ENCODE measurements at regions of chr18 and their contacts with region 1.

Region 1: GRCh38 chr18:50287441-50288347 is at the start of gene CXXC1:
- DNase-seq: peak; percentile 99
- ATAC-seq: peak; percentile 88
- H3K4me3 ChIP-seq: peak within 1 kb of the TSS; percentile 83 to 97
- H3K27ac ChIP-seq: peak within 1 kb of the TSS; percentile 48
- H3K4me1 ChIP-seq: peaks cover 5 to 25% of the 10 kb centered on the region in 2 experiments; a peak in 3 of 4 replicates
- H3K27me3 ChIP-seq: no peaks in the 10 kb centered on the region
- CTCF ChIP-seq: peak in 1 of 3 experiments; percentile 43; a peak in 1 of 6 replicates
- POLR2A ChIP-seq: no peak
- RAD21 ChIP-seq: no peak
- total RNA-seq, gene CXXC1: 101 TPM

Region 2: DNA sequence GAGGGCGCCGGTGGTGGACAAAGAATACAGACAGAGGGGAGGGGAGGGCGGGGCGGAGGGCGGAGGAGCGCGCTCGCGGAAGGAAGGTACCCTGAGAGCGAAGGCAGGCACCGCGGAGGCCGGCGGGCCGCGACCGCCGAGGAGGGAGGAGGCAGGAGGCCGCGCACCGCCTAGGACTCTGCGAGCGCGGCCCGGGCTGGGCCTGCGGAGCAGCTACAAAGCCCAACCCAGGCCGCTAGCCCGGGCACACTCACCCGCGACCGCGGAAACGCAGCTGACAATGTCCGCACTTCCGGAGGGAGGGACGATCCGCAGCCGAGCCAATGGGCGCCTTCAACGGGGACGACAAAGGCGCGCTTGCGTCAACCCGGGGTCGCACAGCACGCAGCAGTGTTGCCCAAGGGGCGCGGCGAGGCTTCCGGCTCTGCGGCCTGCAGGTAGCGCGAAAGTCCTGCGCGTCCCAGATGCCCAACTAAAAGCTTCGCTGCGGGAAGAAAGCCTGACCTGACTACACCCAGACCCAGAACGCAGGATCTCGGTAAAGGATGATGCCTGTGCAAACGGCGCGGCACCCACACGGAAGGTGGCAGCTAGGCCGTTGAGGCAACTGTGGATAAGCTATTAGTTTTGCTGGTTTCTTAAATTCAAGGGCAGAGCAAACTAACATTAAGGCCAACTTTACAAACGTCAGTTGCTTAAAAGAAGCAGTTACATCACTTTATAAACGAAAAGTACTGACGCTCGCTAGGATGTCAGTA is 800.6 kb before region 1 on chr18 and contains the start of gene C18orf32:
- CTCF ChIA-PET with region 1: no interaction called
- POLR2A ChIA-PET with region 1: no interaction called
- RAD21 ChIA-PET with region 1: no interaction called
- intact Hi-C with region 1: loop called (anchors 10 kb)
- DNase-seq: peak; percentile 83
- ATAC-seq: peak; percentile 92
- H3K4me3 ChIP-seq: peak within 1 kb of the TSS; percentile 78 to 95
- H3K27ac ChIP-seq: peak within 1 kb of the TSS; percentile 76
- H3K4me1 ChIP-seq: peaks cover 10 to 46% of the 10 kb centered on the region in 2 experiments; a peak in 3 of 4 replicates
- H3K27me3 ChIP-seq: no peaks in the 10 kb centered on the region
- CTCF ChIP-seq: no peak
- POLR2A ChIP-seq: peak; percentile 81
- RAD21 ChIP-seq: no peak
- total RNA-seq, gene C18orf32: 35.0 TPM

Region 3: DNA sequence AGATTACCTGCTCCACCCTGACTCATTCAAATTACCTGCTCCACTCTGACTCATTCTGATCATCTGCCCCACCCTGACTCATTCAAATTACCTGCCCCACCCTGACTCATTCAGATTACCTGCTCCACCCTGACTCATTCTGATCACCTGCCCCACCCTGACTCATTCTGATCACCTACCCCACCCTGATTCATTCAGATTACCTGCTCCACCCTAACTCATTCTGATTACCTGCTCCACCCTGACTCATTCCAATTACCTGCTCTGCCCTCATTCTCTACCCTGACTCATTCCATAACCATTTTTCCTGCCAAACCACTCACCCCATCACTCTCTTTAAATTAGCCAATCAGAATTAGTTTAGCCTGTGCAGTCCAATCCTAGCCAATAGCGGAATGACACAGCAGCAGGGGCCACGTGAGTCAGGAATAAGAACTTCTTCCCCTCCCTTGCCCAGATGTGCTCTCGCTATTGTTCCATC is 47.6 kb before region 1 on chr18:
- CTCF ChIA-PET with region 1: no interaction called
- POLR2A ChIA-PET with region 1: no interaction called
- RAD21 ChIA-PET with region 1: no interaction called
- intact Hi-C with region 1: loop called (anchors 2 kb)
- DNase-seq: peak; percentile 93
- ATAC-seq: peak; percentile 88
- H3K4me3 ChIP-seq: no peak overlapping the region; a peak in 1 of 4 replicates
- H3K27ac ChIP-seq: peak overlapping the region; percentile 52; the same call in 1 of the 2 replicates
- H3K4me1 ChIP-seq: peaks cover 2 to 26% of the 10 kb centered on the region in 2 experiments; a peak in 3 of 4 replicates
- H3K27me3 ChIP-seq: no peaks in the 10 kb centered on the region
- CTCF ChIP-seq: no peak
- POLR2A ChIP-seq: no peak
- RAD21 ChIP-seq: no peak

Region 4: DNA sequence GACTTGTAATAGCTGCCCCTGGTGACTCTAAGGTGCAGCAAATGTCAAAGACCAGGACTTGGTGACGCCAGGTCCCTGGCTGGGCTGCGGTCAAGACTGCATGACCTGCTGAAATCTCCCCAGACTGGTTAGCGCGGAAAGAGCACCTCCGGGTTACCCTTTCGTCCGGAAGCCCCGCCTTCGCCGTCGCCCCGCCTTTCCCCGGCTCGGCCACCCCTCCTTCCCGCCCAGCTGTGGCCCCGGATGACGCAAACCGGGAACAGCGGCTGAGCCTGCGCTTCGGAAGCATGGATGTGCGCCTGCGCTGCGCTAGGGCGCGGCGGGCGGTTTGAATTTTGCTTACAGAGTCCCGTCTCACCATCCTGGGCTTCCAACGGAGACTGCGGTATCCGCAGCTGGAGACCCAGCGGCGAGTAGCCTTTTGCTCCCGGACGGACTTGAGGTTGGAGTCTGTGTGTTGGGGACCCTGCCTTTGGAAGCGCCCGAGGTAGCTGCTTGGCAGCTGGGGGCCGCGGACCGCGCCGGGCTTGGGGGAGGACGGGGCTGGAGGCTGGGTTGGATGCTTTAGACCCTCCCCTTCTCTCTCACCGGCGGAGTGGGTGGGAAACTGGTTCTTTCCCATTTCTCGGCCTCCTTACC is 87.2 kb after region 1 on chr18 and contains the start of gene SKA1:
- CTCF ChIA-PET with region 1: no interaction called
- POLR2A ChIA-PET with region 1: no interaction called
- RAD21 ChIA-PET with region 1: no interaction called
- intact Hi-C with region 1: loop called (anchors 5 kb)
- DNase-seq: peak; percentile 89
- ATAC-seq: peak; percentile 97
- H3K4me3 ChIP-seq: peak within 1 kb of the TSS; percentile 82 to 92
- H3K27ac ChIP-seq: peak within 1 kb of the TSS; percentile 56
- H3K4me1 ChIP-seq: peaks cover 0 to 23% of the 10 kb centered on the region in 2 experiments; a peak in 2 of 4 replicates
- H3K27me3 ChIP-seq: no peaks in the 10 kb centered on the region
- CTCF ChIP-seq: no peak
- POLR2A ChIP-seq: peak; percentile 97
- RAD21 ChIP-seq: no peak
- total RNA-seq, gene SKA1: 34.5 TPM